ENCODE measurements at regions of chr2 and their contacts with region 1.

Region 1: GRCh38 chr2:122148128-122148767 is 392.8 kb downstream of the TSN start:
- DNase-seq: no peak
- ATAC-seq: peak; percentile 45
- H3K4me3 ChIP-seq: no peak overlapping the region
- H3K27ac ChIP-seq: no peak overlapping the region
- H3K4me1 ChIP-seq: no peaks in the 10 kb centered on the region
- H3K27me3 ChIP-seq: no peaks in the 10 kb centered on the region
- CTCF ChIP-seq: no peak
- EP300 ChIP-seq: peak in 1 of 2 experiments; percentile 54; a peak in 1 of 4 replicates
- POLR2A ChIP-seq: no peak
- RAD21 ChIP-seq: no peak

Region 2: DNA sequence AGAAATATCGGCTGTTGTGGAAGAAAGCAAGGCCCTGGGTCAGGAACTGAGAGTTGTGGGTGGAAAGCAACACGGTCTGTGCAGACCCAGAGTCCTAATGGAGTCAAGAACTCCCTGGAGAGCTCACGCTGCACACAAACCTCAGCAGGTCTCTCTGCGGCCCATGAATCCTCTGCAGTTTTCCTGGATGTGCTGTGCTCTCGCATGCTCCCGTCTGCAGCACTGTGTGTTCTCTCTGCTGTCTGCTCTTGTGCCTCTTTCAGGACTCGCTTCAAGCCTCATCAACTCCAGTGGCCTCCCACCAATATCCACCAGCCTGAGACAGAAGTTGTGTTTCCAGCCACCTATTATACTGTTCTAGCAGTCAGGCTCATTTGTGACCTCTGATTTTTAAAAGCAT is 593.2 kb before region 1 on chr2:
- CTCF ChIA-PET with region 1: no interaction called
- POLR2A ChIA-PET with region 1: no interaction called
- RAD21 ChIA-PET with region 1: no interaction called
- SMC1A ChIA-PET with region 1: no interaction called
- in situ Hi-C with region 1: no loop called
- intact Hi-C with region 1: no loop called
- DNase-seq: no peak
- ATAC-seq: peak; percentile 9; the same call in 2 of the 3 replicates
- H3K4me3 ChIP-seq: no peak overlapping the region
- H3K27ac ChIP-seq: no peak overlapping the region
- H3K4me1 ChIP-seq: peaks cover 17% of the 10 kb centered on the region
- H3K27me3 ChIP-seq: no peaks in the 10 kb centered on the region
- CTCF ChIP-seq: no peak
- EP300 ChIP-seq: no peak
- POLR2A ChIP-seq: no peak
- RAD21 ChIP-seq: no peak

Region 3: GRCh38 chr2:122112216-122113005 is 35.8 kb before region 1 on chr2:
- CTCF ChIA-PET with region 1: no interaction called
- POLR2A ChIA-PET with region 1: no interaction called
- RAD21 ChIA-PET with region 1: no interaction called
- SMC1A ChIA-PET with region 1: no interaction called
- in situ Hi-C with region 1: no loop called
- intact Hi-C with region 1: no loop called
- DNase-seq: no peak
- ATAC-seq: no peak
- H3K4me3 ChIP-seq: no peak overlapping the region
- H3K27ac ChIP-seq: no peak overlapping the region
- H3K4me1 ChIP-seq: no peaks in the 10 kb centered on the region
- H3K27me3 ChIP-seq: peaks cover 0 to 3% of the 10 kb centered on the region in 2 experiments; a peak in 1 of 4 replicates
- CTCF ChIP-seq: no peak
- EP300 ChIP-seq: no peak
- POLR2A ChIP-seq: no peak
- RAD21 ChIP-seq: no peak

Region 4: GRCh38 chr2:122129399-122129798 is 18.8 kb before region 1 on chr2:
- CTCF ChIA-PET with region 1: no interaction called
- POLR2A ChIA-PET with region 1: no interaction called
- RAD21 ChIA-PET with region 1: no interaction called
- SMC1A ChIA-PET with region 1: no interaction called
- in situ Hi-C with region 1: no loop called
- intact Hi-C with region 1: no loop called
- DNase-seq: no peak
- ATAC-seq: no peak
- H3K4me3 ChIP-seq: no peak overlapping the region
- H3K27ac ChIP-seq: no peak overlapping the region
- H3K4me1 ChIP-seq: no peaks in the 10 kb centered on the region
- H3K27me3 ChIP-seq: no peaks in the 10 kb centered on the region
- CTCF ChIP-seq: no peak
- EP300 ChIP-seq: no peak
- POLR2A ChIP-seq: no peak
- RAD21 ChIP-seq: no peak

Region 5: GRCh38 chr2:122163617-122164016 is 15.4 kb after region 1 on chr2:
- CTCF ChIA-PET with region 1: interaction called, 5 read pairs
- POLR2A ChIA-PET with region 1: interaction called, 4 read pairs
- RAD21 ChIA-PET with region 1: interaction called, 6 read pairs
- SMC1A ChIA-PET with region 1: interaction called, 12 read pairs
- in situ Hi-C with region 1: no loop called
- intact Hi-C with region 1: no loop called
- DNase-seq: no peak
- ATAC-seq: no peak
- H3K4me3 ChIP-seq: no peak overlapping the region
- H3K27ac ChIP-seq: no peak overlapping the region
- H3K4me1 ChIP-seq: no peaks in the 10 kb centered on the region
- H3K27me3 ChIP-seq: no peaks in the 10 kb centered on the region; a peak in 1 of 4 replicates
- CTCF ChIP-seq: no peak
- EP300 ChIP-seq: no peak
- POLR2A ChIP-seq: no peak
- RAD21 ChIP-seq: no peak

Measured in GM12878 (cell line).